HCT116 (cell line): ENCODE measurements at regions of chr18 and their contacts with region 1.

Region 1: GRCh38 chr18:38475686-38476085 is 910.1 kb upstream of the CELF4 start:
- DNase-seq: no peak
- ATAC-seq: no peak
- H3K4me3 ChIP-seq: no peak overlapping the region
- H3K27ac ChIP-seq: no peak overlapping the region
- H3K4me1 ChIP-seq: no peaks in the 10 kb centered on the region
- H3K27me3 ChIP-seq: no peaks in the 10 kb centered on the region
- CTCF ChIP-seq: no peak
- POLR2A ChIP-seq: no peak
- RAD21 ChIP-seq: no peak

Region 2: GRCh38 chr18:38520786-38521185 is 45.1 kb after region 1 on chr18:
- CTCF ChIA-PET with region 1: no interaction called
- POLR2A ChIA-PET with region 1: no interaction called
- RAD21 ChIA-PET with region 1: no interaction called
- intact Hi-C with region 1: loop called (anchors 1 kb)
- DNase-seq: no peak
- ATAC-seq: no peak
- H3K4me3 ChIP-seq: no peak overlapping the region
- H3K27ac ChIP-seq: no peak overlapping the region
- H3K4me1 ChIP-seq: no peaks in the 10 kb centered on the region
- H3K27me3 ChIP-seq: no peaks in the 10 kb centered on the region
- CTCF ChIP-seq: no peak
- POLR2A ChIP-seq: no peak
- RAD21 ChIP-seq: no peak